Mammary epithelial cell (primary cell): ENCODE measurements at regions of chr18 and their contacts with region 1.

Region 1: GRCh38 chr18:1050012-1050657 is 145.5 kb downstream of the ADCYAP1 start:
- DNase-seq: no peak
- H3K4me3 ChIP-seq: no peak overlapping the region
- H3K27ac ChIP-seq: no peak overlapping the region
- H3K4me1 ChIP-seq: no peaks in the 10 kb centered on the region
- H3K27me3 ChIP-seq: no peaks in the 10 kb centered on the region
- CTCF ChIP-seq: no peak

Region 2: GRCh38 chr18:1133541-1133940 is 83.4 kb after region 1 on chr18:
- CTCF ChIA-PET with region 1: no interaction called
- dilution Hi-C with region 1: loop called (anchors 5 kb)
- in situ Hi-C with region 1: no loop called
- intact Hi-C with region 1: no loop called
- DNase-seq: no peak
- H3K4me3 ChIP-seq: no peak overlapping the region
- H3K27ac ChIP-seq: no peak overlapping the region
- H3K4me1 ChIP-seq: no peaks in the 10 kb centered on the region
- H3K27me3 ChIP-seq: no peaks in the 10 kb centered on the region
- CTCF ChIP-seq: no peak